ENCODE measurements at regions of chr10 and their contacts with region 1.

Region 1: DNA sequence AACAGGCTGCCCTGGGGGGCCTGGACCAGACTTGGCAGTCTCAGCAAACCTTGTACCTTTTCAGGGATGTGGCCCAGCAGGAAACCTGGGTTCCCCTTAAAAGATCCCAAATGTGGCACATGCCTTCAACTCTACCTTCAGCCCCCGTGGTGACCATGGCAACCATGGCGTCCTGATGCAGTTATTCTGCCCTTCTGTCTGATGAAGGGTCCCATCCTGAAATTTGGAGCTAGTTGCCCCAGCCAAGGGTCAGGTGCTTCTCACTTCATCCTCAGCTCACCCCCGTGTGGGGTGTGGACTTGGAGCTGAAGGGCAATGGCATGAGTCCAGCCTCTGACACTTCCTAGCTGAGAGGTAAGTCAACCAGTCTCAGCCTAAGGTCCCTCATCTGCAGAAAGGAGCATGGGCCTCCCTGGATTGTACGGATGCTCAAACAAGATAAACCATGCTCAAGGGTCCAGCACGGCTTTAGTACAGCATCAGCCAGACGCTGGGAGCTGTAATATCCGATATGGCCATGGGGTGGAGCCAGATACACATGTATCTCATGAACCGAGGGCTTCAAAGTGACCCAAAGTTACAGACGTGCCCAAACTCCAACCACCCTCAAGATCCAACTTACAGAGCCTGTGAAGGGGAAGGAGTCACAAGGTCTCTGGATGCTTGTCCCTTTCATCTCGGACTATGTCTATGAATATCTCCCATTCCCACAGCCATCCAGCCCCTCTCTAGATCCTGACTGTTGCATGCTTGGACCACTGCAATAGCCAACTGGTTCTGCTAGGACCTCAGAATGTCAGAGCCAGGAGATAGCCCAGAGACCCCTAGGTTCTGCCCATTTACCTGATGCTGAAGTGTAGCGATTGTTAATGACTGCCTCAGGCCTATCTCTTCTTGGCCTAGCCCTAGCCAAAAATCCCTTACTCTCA is 142.5 kb downstream of the SH3PXD2A start:
- DNase-seq: peak; percentile 68 to 87 (median 79)
- ATAC-seq: peak; percentile 94
- H3K4me3 ChIP-seq: no peak overlapping the region
- H3K4me3 Mint-ChIP-seq: no peak overlapping the region
- H3K27ac ChIP-seq: no peak overlapping the region
- H3K27ac Mint-ChIP-seq: no peak overlapping the region
- H3K4me1 ChIP-seq: peaks cover 7% of the 10 kb centered on the region
- H3K4me1 Mint-ChIP-seq: no peaks in the 10 kb centered on the region
- H3K27me3 ChIP-seq: no peaks in the 10 kb centered on the region
- H3K27me3 Mint-ChIP-seq: no peaks in the 10 kb centered on the region
- CTCF ChIP-seq: peak; percentile 88

Region 2: DNA sequence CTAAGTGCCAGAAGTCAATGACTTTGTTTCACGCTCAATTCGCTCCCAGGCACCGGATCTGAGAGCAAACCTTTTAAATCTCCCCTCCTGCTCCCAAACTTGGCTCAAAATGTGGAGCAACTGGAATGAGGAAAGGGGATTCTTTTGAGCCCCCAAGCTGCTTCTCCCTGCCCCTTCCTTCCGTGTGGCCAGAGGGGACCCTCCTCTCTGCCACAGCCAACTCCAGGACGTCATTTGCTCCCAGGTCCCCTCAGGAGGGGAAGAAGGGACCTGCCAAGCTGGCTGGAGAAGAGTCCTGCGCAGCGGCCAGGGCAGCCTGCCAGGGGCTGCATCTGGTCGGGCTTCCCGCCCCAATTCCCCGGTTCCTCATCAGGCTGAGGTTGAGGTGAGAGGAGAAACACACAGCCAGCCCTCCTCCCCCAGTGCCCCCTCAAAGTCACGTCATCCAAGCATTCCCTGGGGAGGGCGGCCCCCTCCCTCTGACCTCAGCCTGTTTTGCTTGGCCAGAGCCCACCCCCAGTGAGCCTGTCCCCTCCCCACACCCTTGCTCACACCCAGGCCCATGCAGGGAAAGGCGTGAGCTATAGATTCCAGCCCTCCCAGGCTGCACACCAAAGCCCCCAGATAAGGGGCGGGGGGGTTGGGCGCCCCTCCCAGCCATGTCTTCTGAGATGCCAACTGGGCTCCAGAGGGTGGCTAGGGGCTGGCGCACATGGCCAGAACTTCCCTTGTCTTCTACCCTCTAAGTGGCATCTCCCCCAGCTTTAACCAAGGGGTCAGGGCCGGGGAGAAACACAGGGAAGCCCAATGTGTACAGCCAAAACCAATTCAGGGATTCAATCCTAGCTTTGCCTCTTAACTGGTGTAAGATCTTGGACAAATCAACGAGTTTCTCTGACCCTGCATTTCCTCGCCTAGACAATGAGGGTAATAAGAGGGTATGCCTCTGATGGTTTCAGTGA is 107.5 kb after region 1 on chr10:
- CTCF ChIA-PET with region 1: no interaction called
- POLR2A ChIA-PET with region 1: no interaction called
- intact Hi-C with region 1: no loop called
- DNase-seq: no peak
- ATAC-seq: no peak
- H3K4me3 ChIP-seq: no peak overlapping the region
- H3K4me3 Mint-ChIP-seq: no peak overlapping the region
- H3K27ac ChIP-seq: no peak overlapping the region
- H3K27ac Mint-ChIP-seq: no peak overlapping the region
- H3K4me1 ChIP-seq: no peaks in the 10 kb centered on the region
- H3K4me1 Mint-ChIP-seq: no peaks in the 10 kb centered on the region
- H3K27me3 ChIP-seq: peaks cover 5 to 12% of the 10 kb centered on the region in 2 experiments
- H3K27me3 Mint-ChIP-seq: peaks cover 29% of the 10 kb centered on the region
- CTCF ChIP-seq: no peak

Region 3: GRCh38 chr10:103847909-103848468 is 135.2 kb after region 1 on chr10:
- CTCF ChIA-PET with region 1: interaction called, 10 read pairs
- POLR2A ChIA-PET with region 1: interaction called, 4 read pairs
- intact Hi-C with region 1: no loop called
- DNase-seq: peak in 1 of 14 experiments; percentile 19
- ATAC-seq: no peak
- H3K4me3 ChIP-seq: no peak overlapping the region
- H3K4me3 Mint-ChIP-seq: no peak overlapping the region
- H3K27ac ChIP-seq: no peak overlapping the region
- H3K27ac Mint-ChIP-seq: no peak overlapping the region
- H3K4me1 ChIP-seq: peaks cover 23% of the 10 kb centered on the region
- H3K4me1 Mint-ChIP-seq: peaks cover 29% of the 10 kb centered on the region
- H3K27me3 ChIP-seq: no peaks in the 10 kb centered on the region
- H3K27me3 Mint-ChIP-seq: peaks cover 21% of the 10 kb centered on the region
- CTCF ChIP-seq: no peak

Region 4: GRCh38 chr10:103859161-103860086 is 146.6 kb after region 1 on chr10:
- CTCF ChIA-PET with region 1: interaction called, 9 read pairs
- POLR2A ChIA-PET with region 1: interaction called, 3 read pairs
- intact Hi-C with region 1: loop called (anchors 1 kb)
- DNase-seq: peak; percentile 24 to 74 (median 42)
- ATAC-seq: peak; percentile 69
- H3K4me3 ChIP-seq: no peak overlapping the region
- H3K4me3 Mint-ChIP-seq: no peak overlapping the region
- H3K27ac ChIP-seq: no peak overlapping the region
- H3K27ac Mint-ChIP-seq: no peak overlapping the region
- H3K4me1 ChIP-seq: peaks cover 17% of the 10 kb centered on the region
- H3K4me1 Mint-ChIP-seq: peaks cover 10% of the 10 kb centered on the region
- H3K27me3 ChIP-seq: peaks cover 13 to 16% of the 10 kb centered on the region in 2 experiments
- H3K27me3 Mint-ChIP-seq: peaks cover 31% of the 10 kb centered on the region
- CTCF ChIP-seq: peak; percentile 75